ENCODE measurements at regions of chr11 and their contacts with region 1.

Region 1: DNA sequence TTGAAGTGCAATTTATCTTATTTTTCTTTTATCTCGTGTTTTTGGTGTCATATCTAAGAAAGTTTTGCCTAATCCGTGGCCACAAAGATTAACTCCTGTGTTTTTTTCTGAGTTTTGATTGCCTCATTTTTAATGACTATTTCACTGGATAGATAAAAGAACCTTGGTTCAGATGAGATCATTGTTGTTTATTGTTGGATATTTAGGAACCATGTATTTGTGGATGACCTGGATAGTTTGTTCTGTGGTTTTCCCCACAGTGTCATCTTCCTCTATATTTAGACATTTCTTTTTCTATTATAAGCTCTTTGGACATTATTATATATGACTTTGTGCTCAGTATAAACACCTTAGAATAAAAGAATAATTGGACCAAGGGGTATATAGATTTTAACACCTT is 37.2 kb downstream of the PPP6R3 start:
- DNase-seq: no peak
- ATAC-seq: no peak
- H3K4me3 ChIP-seq: no peak overlapping the region
- H3K4me3 Mint-ChIP-seq: peak overlapping the region in 9 of 10 donors; percentile 23 to 56 (median 41)
- H3K27ac ChIP-seq: no peak overlapping the region
- H3K27ac Mint-ChIP-seq: peak overlapping the region in 2 of 9 donors; percentile 45 to 54
- H3K4me1 ChIP-seq: peaks cover 20 to 24% of the 10 kb centered on the region in 2 donors
- H3K4me1 Mint-ChIP-seq: peaks cover 48 to 98% (median 88%) of the 10 kb centered on the region in 7 donors
- H3K27me3 ChIP-seq: no peaks in the 10 kb centered on the region
- H3K27me3 Mint-ChIP-seq: no peaks in the 10 kb centered on the region

Region 2: DNA sequence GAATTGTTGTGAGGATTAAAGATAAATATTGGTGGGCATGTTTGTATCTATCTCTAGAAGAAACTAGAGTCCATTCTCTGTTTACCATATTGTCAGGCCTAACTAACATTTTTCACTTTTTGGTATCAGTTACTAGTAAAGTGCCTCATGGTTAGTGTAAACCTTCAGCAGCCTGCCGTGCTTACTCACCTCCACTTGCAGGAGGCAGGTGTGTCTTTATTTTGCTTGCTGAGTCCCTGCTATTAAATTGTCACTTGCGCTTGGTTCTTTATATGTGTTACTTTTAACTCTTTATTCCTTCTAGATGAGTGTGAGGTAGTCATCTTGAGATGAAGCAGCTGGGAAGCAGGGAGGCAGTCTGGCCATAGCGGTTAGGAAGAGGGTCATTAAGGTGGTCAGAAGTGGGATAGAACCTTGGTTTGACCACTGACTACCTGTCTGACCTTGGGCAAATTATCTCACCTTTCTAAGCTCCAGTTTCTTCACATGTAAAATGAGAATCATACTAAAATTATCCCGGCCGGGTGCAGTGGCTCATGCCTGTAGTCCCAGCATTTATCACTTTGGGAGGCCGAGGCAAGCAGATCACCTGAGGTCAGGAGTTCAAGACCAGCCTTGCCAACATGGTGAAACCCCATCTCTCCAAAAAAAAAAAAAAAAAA is 16.1 kb before region 1 on chr11:
- CTCF ChIA-PET with region 1: no interaction called
- POLR2A ChIA-PET with region 1: no interaction called
- intact Hi-C with region 1: loop called in 1 of 2 experiments (anchors 2 kb)
- DNase-seq: no peak
- ATAC-seq: no peak
- H3K4me3 ChIP-seq: no peak overlapping the region
- H3K4me3 Mint-ChIP-seq: peak overlapping the region in 8 of 10 donors; percentile 2 to 75 (median 54)
- H3K27ac ChIP-seq: no peak overlapping the region
- H3K27ac Mint-ChIP-seq: peak overlapping the region in 6 of 9 donors; percentile 1 to 71 (median 49)
- H3K4me1 ChIP-seq: peaks cover 28 to 43% of the 10 kb centered on the region in 2 donors
- H3K4me1 Mint-ChIP-seq: peaks cover 50 to 97% (median 86%) of the 10 kb centered on the region in 7 donors
- H3K27me3 ChIP-seq: no peaks in the 10 kb centered on the region
- H3K27me3 Mint-ChIP-seq: no peaks in the 10 kb centered on the region

Region 3: GRCh38 chr11:68579455-68579854 is 81.7 kb after region 1 on chr11:
- CTCF ChIA-PET with region 1: no interaction called
- POLR2A ChIA-PET with region 1: no interaction called
- intact Hi-C with region 1: no loop called
- DNase-seq: no peak
- ATAC-seq: no peak
- H3K4me3 ChIP-seq: no peak overlapping the region
- H3K4me3 Mint-ChIP-seq: no peak overlapping the region
- H3K27ac ChIP-seq: no peak overlapping the region
- H3K27ac Mint-ChIP-seq: peak overlapping the region in 3 of 9 donors; percentile 8 to 28 (median 23)
- H3K4me1 ChIP-seq: no peaks in the 10 kb centered on the region
- H3K4me1 Mint-ChIP-seq: peaks cover 0 to 25% (median 4%) of the 10 kb centered on the region in 7 donors
- H3K27me3 ChIP-seq: no peaks in the 10 kb centered on the region
- H3K27me3 Mint-ChIP-seq: no peaks in the 10 kb centered on the region

Measured in naive thymus-derived CD4-positive, alpha-beta T cell (primary cell).